ENCODE measurements at regions of chrX and their contacts with region 1.

Region 1: GRCh38 chrX:130060122-130061069 is 49.9 kb downstream of the ELF4 start:
- DNase-seq: peak; percentile 90
- ATAC-seq: peak; percentile 91
- H3K4me3 Mint-ChIP-seq: peak overlapping the region; percentile 65
- H3K27ac Mint-ChIP-seq: peak overlapping the region; percentile 55
- H3K4me1 Mint-ChIP-seq: peaks cover 4% of the 10 kb centered on the region
- H3K27me3 Mint-ChIP-seq: no peaks in the 10 kb centered on the region

Region 2: DNA sequence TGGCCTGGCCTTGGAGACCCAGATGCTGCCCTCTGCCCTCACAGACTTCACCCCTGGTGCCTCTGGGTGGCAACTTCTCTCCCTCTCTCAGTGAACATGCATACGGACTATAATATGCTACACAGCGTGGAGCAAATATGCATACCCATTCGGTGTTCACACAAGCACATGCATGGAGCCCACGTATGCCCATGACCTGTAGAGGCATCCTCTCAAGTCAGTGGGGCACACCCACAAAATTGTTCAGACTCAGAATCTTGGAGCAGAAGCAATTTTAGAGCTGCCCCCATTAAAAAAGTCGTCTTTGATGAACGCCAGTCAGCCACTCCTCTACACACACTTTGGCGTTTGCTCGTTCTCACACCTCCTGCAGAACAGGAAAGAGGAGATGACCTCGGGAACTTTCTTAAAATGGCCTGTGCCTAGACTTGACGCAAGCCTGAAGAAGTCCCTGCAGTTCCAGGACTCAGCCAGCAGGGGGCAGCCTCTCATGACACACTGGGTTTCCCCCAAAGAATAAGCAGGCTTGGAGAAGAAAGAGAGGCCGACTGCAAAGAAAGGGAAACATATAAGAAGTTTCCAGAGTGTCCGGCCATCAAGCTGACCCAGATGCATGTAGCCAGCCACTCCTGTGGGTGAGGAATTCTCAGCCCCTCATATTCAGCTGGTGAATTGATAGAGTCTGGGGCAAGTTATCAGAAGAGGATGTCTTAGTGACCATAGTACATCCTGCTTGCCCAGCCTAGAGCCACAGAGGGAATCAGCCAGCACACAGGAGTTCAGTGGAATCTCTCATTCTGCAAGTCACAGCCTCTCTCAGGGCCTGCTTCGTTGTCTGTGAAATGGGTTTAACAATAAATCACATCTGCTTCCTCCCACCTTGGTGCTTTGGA is 422.9 kb before region 1 on chrX:
- CTCF ChIA-PET with region 1: interaction called, 3 read pairs
- POLR2A ChIA-PET with region 1: no interaction called
- intact Hi-C with region 1: loop called in 1 of 2 experiments (anchors 1 kb)
- DNase-seq: peak; percentile 85
- ATAC-seq: peak; percentile 76
- H3K4me3 Mint-ChIP-seq: no peak overlapping the region
- H3K27ac Mint-ChIP-seq: no peak overlapping the region
- H3K4me1 Mint-ChIP-seq: no peaks in the 10 kb centered on the region
- H3K27me3 Mint-ChIP-seq: no peaks in the 10 kb centered on the region

Region 3: GRCh38 chrX:129843459-129844306 is 216.7 kb before region 1 on chrX and contains the start of gene ZDHHC9:
- CTCF ChIA-PET with region 1: no interaction called
- POLR2A ChIA-PET with region 1: interaction called, 3 read pairs
- intact Hi-C with region 1: loop called in 1 of 2 experiments (anchors 5 kb)
- DNase-seq: peak; percentile 92
- ATAC-seq: peak; percentile 97
- H3K4me3 Mint-ChIP-seq: peak within 1 kb of the TSS; percentile 77
- H3K27ac Mint-ChIP-seq: peak within 1 kb of the TSS; percentile 75
- H3K4me1 Mint-ChIP-seq: peaks cover 32% of the 10 kb centered on the region
- H3K27me3 Mint-ChIP-seq: no peaks in the 10 kb centered on the region
- total RNA-seq, gene ZDHHC9: 12.5 to 14.2 TPM

Region 4: GRCh38 chrX:129925305-129926092 is 134.9 kb before region 1 on chrX:
- CTCF ChIA-PET with region 1: interaction called, 31 read pairs
- POLR2A ChIA-PET with region 1: no interaction called
- intact Hi-C with region 1: loop called (anchors 1 to 5 kb)
- DNase-seq: peak; percentile 80
- ATAC-seq: peak; percentile 78
- H3K4me3 Mint-ChIP-seq: no peak overlapping the region
- H3K27ac Mint-ChIP-seq: no peak overlapping the region
- H3K4me1 Mint-ChIP-seq: peaks cover 1% of the 10 kb centered on the region
- H3K27me3 Mint-ChIP-seq: no peaks in the 10 kb centered on the region

Region 5: GRCh38 chrX:129957241-129958082 is 102.9 kb before region 1 on chrX:
- CTCF ChIA-PET with region 1: no interaction called
- POLR2A ChIA-PET with region 1: no interaction called
- intact Hi-C with region 1: loop called in 1 of 2 experiments (anchors 1 kb)
- DNase-seq: peak; percentile 71
- ATAC-seq: peak; percentile 61
- H3K4me3 Mint-ChIP-seq: peak overlapping the region; percentile 53
- H3K27ac Mint-ChIP-seq: peak overlapping the region; percentile 42
- H3K4me1 Mint-ChIP-seq: peaks cover 12% of the 10 kb centered on the region
- H3K27me3 Mint-ChIP-seq: peaks cover 2% of the 10 kb centered on the region

Region 6: DNA sequence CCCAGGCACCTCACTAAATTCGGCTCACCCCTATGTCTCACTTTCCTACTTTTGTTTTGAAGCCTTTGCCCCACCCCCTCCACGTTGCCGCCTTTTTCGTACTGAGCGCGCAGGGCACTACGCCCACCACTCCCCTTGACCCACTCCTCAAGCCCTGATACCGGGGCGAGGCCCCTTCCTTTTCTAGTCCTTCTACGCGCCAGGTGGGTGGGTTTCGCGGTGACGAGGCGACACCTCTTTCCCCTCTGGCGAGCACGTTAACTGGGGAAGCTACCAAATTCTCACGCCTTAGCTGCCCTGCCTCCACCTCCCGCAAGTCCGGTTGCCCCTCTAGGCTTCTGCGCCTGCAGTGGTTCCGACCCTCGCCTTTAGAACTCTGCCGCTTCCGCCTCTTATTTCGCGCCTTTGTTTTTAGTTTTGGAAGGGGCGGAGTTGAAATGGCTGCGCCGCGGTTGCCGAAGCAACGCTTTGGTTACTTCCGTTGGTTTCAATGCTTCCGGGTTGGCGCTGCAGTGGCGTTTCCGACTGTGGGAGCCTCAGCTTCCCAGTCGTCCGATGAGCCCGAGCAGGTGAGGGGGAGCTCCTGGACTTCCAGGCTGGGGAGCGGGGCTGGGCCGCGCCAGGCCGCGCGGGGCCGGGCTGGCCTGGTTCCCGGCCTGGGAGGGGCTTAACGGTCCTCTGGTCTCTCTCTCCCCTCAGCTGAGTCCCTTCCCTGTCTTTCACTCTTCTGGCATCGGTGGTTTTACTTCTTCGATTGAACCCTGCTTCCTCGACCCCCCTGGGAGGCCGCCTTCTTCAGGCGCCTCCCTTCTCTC is 279.2 kb after region 1 on chrX and contains the start of gene SLC25A14:
- CTCF ChIA-PET with region 1: no interaction called
- POLR2A ChIA-PET with region 1: no interaction called
- intact Hi-C with region 1: loop called in 1 of 2 experiments (anchors 1 kb)
- DNase-seq: peak; percentile 82
- ATAC-seq: peak; percentile 88
- H3K4me3 Mint-ChIP-seq: peak within 1 kb of the TSS; percentile 87
- H3K27ac Mint-ChIP-seq: peak within 1 kb of the TSS; percentile 94
- H3K4me1 Mint-ChIP-seq: peaks cover 14% of the 10 kb centered on the region
- H3K27me3 Mint-ChIP-seq: no peaks in the 10 kb centered on the region
- total RNA-seq, gene SLC25A14: 9.6 to 11.0 TPM

Measured in activated CD4-positive, alpha-beta T cell treated with anti-CD3 and anti-CD28 coated beads for 36 hours (primary cell).